IMR-90 (cell line): ENCODE measurements at regions of chr3 and their contacts with region 1.

Region 1: DNA sequence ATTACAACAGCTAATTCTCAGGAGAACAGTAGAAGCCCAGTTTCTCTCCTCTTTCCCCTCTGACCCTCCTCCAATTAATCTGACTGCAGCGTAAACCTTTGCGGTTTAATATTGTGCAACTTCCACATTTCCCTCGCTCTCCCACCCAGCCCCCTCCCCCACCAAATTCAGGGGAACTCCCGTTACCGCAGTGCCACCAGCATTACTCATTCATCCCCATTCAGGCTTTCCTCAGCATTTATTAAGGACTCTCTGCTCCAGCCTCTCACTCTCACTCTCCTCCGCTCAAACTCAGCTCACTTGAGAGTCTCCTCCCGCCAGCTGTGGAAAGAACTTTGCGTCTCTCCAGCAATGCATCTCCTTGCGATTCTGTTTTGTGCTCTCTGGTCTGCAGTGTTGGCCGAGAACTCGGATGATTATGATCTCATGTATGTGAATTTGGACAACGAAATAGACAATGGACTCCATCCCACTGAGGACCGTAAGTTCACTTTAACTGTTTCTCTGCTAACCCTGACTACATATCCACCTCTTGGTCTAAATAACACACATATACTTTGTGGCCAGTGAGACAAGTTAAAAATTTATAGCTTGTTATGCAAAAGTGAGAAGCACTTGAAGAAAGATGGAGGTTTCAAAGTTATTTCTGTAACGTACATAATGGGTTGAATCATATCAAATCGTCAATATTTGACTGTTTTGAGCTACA is at the start of gene PTX3:
- DNase-seq: peak; percentile 94
- ATAC-seq: peak; percentile 72
- H3K4me3 ChIP-seq: peak within 1 kb of the TSS; percentile 68
- H3K27ac ChIP-seq: peak within 1 kb of the TSS; percentile 68
- H3K4me1 ChIP-seq: peaks cover 5% of the 10 kb centered on the region; the same call in 1 of the 2 replicates
- H3K27me3 ChIP-seq: no peaks in the 10 kb centered on the region
- CTCF ChIP-seq: no peak
- POLR2A ChIP-seq: peak; percentile 75; the same call in 1 of the 2 replicates
- RAD21 ChIP-seq: peak; percentile 19; the same call in 1 of the 2 replicates
- total RNA-seq, gene PTX3: 96.7 and 97.9 TPM in 2 replicates

Region 2: DNA sequence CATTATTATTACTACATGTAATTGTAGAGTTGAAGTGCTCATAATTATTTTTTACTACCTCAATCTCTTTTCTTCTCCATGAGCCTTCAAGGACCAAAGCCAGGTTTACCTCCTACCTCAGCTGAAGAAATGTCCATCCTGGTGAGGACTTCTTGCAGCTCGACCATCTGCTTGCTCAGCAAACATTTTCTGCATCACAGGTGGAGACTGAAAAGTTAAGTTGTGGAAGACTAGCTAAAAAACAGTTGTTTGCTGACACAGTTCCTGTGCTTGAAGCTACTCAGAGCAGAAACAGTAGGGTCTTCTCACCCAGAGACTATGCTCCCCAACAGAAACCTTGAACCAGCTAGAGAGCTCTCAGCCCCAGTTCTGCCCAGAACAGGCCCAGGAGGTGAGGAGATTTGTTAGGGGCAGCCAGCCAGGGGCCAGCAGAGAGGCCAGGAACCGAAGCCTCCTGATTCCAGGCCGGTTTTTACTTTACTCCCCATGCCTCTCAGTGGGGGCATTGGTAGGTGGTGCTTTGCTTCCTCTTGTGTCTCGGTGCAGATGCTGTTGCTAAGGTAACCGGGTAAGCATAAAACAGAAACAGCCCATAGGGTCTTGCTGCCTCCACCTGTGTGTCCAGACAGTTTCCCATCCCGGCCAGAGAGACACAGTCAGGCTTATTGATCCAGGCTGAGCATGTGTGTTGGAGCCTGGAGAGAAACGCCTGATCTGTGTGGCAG is 331.6 kb before region 1 on chr3:
- CTCF ChIA-PET with region 1: no interaction called
- POLR2A ChIA-PET with region 1: no interaction called
- dilution Hi-C with region 1: no loop called
- in situ Hi-C with region 1: no loop called
- intact Hi-C with region 1: no loop called
- DNase-seq: no peak
- ATAC-seq: no peak
- H3K4me3 ChIP-seq: no peak overlapping the region
- H3K27ac ChIP-seq: no peak overlapping the region
- H3K4me1 ChIP-seq: peaks cover 14% of the 10 kb centered on the region
- H3K27me3 ChIP-seq: no peaks in the 10 kb centered on the region
- CTCF ChIP-seq: no peak
- POLR2A ChIP-seq: no peak
- RAD21 ChIP-seq: no peak

Region 3: DNA sequence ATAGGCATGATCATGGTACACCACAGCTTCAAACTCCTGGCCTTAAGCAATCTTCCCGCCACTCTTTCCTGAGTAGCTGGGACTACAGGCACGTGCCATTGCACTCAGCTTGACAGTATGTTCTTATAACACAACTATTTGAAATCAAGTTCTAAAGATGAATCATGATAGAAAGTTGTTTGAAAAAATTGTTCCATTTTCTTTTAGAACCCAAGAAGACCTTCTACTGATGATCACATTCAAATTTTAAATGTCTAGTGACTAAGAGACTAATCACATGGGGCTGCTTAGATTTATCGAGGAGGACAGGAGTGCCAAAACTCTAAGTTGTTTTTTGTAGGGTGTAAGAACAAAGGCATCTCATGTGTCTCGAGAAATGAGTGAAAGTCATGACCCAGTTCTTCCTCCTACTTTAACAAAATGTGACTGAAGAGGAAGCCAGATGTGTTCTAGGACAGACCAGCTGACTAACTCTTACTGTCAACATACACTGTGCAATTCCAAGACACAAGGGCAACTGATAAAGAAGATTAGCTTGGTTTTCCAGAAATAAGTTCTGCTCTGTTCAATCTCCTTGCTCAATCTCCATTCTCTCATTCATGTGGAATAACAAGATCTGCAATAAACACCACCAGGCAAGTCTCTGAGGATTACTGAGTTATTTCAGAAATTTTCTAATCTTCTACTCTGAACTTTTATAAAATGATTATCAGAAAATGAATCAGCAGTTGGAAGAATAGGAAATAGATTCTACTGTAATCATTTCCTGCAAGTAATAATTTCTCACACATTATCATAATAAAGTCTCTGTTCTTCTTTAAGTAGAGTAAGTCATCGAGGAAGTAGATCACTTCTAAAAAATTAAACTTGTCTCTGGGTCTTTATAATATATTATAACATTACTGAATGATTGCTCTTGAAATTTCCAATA is 154.2 kb before region 1 on chr3:
- CTCF ChIA-PET with region 1: no interaction called
- POLR2A ChIA-PET with region 1: no interaction called
- dilution Hi-C with region 1: no loop called
- in situ Hi-C with region 1: no loop called
- intact Hi-C with region 1: loop called (anchors 1 kb)
- DNase-seq: peak; percentile 93
- ATAC-seq: peak; percentile 86
- H3K4me3 ChIP-seq: no peak overlapping the region
- H3K27ac ChIP-seq: peak overlapping the region; percentile 18; the same call in 1 of the 2 replicates
- H3K4me1 ChIP-seq: no peaks in the 10 kb centered on the region
- H3K27me3 ChIP-seq: no peaks in the 10 kb centered on the region
- CTCF ChIP-seq: no peak
- POLR2A ChIP-seq: no peak
- RAD21 ChIP-seq: no peak

Region 4: GRCh38 chr3:157311633-157312375 is 124.9 kb before region 1 on chr3:
- CTCF ChIA-PET with region 1: no interaction called
- POLR2A ChIA-PET with region 1: no interaction called
- dilution Hi-C with region 1: no loop called
- in situ Hi-C with region 1: no loop called
- intact Hi-C with region 1: no loop called
- DNase-seq: peak; percentile 94
- ATAC-seq: peak; percentile 88
- H3K4me3 ChIP-seq: no peak overlapping the region
- H3K27ac ChIP-seq: peak overlapping the region; percentile 26; the same call in 1 of the 2 replicates
- H3K4me1 ChIP-seq: peaks cover 5% of the 10 kb centered on the region
- H3K27me3 ChIP-seq: no peaks in the 10 kb centered on the region
- CTCF ChIP-seq: no peak
- POLR2A ChIP-seq: no peak
- RAD21 ChIP-seq: no peak

Region 5: DNA sequence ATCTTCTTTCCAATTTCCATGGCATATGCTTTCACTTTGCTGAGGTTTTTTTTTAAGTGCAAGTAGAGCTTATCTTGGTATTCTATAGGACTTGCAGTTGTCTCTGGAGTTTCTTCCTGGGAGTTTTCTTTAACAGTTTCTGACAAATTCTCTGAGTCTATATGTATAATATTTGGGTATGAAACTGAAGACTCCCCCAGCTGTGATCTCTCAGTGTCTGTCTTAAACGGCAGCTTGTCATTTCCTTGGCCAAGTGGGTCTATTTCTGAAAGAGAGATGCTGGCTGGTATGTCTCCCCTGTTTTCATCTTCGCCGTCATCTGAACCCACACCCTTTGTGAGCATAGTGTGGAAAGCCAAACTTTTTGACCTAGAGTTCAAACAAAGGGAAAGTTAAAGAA is 73.3 kb before region 1 on chr3:
- CTCF ChIA-PET with region 1: interaction called, 3 read pairs
- POLR2A ChIA-PET with region 1: interaction called, 4 read pairs
- dilution Hi-C with region 1: no loop called
- in situ Hi-C with region 1: no loop called
- intact Hi-C with region 1: loop called (anchors 2 kb)
- DNase-seq: no peak
- ATAC-seq: no peak
- H3K4me3 ChIP-seq: no peak overlapping the region
- H3K27ac ChIP-seq: no peak overlapping the region
- H3K4me1 ChIP-seq: peaks cover 7% of the 10 kb centered on the region
- H3K27me3 ChIP-seq: no peaks in the 10 kb centered on the region
- CTCF ChIP-seq: no peak
- POLR2A ChIP-seq: no peak
- RAD21 ChIP-seq: no peak

Region 6: GRCh38 chr3:157493627-157494550 is 57.2 kb after region 1 on chr3:
- CTCF ChIA-PET with region 1: no interaction called
- POLR2A ChIA-PET with region 1: interaction called, 3 read pairs
- dilution Hi-C with region 1: no loop called
- in situ Hi-C with region 1: no loop called
- intact Hi-C with region 1: loop called (anchors 2 kb)
- DNase-seq: peak; percentile 71
- ATAC-seq: peak; percentile 46
- H3K4me3 ChIP-seq: no peak overlapping the region
- H3K27ac ChIP-seq: no peak overlapping the region
- H3K4me1 ChIP-seq: peaks cover 13% of the 10 kb centered on the region
- H3K27me3 ChIP-seq: no peaks in the 10 kb centered on the region
- CTCF ChIP-seq: peak; percentile 80
- POLR2A ChIP-seq: no peak
- RAD21 ChIP-seq: peak; percentile 68

Region 7: DNA sequence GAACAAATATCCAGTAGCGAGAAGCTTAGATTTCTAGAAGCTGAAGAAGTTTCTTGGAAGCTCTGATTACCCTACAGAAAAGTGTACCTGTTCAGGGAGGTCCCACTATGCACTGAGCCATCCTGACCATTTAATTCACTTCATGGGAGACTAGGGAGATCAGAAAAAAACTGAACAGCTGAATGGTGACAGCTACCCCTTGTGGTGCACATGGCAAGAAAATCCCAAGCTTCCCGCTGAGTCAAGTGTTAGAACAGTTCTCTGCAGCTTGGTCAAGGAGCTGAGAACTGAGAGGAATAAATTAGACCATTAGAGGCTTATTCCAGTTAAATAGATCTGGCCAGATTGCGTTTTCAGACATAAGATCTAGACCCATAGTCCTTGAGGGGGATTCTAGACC is 263.7 kb after region 1 on chr3:
- CTCF ChIA-PET with region 1: no interaction called
- POLR2A ChIA-PET with region 1: no interaction called
- dilution Hi-C with region 1: no loop called
- in situ Hi-C with region 1: no loop called
- intact Hi-C with region 1: no loop called
- DNase-seq: peak; percentile 1
- ATAC-seq: no peak
- H3K4me3 ChIP-seq: no peak overlapping the region
- H3K27ac ChIP-seq: no peak overlapping the region
- H3K4me1 ChIP-seq: no peaks in the 10 kb centered on the region
- H3K27me3 ChIP-seq: peaks cover 4% of the 10 kb centered on the region; the same call in 1 of the 2 replicates
- CTCF ChIP-seq: no peak
- POLR2A ChIP-seq: no peak
- RAD21 ChIP-seq: no peak

Region 8: GRCh38 chr3:157981819-157982218 is 545.1 kb after region 1 on chr3:
- CTCF ChIA-PET with region 1: no interaction called
- POLR2A ChIA-PET with region 1: no interaction called
- dilution Hi-C with region 1: no loop called
- in situ Hi-C with region 1: no loop called
- intact Hi-C with region 1: no loop called
- DNase-seq: no peak
- ATAC-seq: no peak
- H3K4me3 ChIP-seq: no peak overlapping the region
- H3K27ac ChIP-seq: no peak overlapping the region
- H3K4me1 ChIP-seq: no peaks in the 10 kb centered on the region
- H3K27me3 ChIP-seq: no peaks in the 10 kb centered on the region
- CTCF ChIP-seq: no peak
- POLR2A ChIP-seq: no peak
- RAD21 ChIP-seq: no peak